ENCODE measurements at regions of chr20 and their contacts with region 1.

Region 1: GRCh38 chr20:5205348-5206210 is 78.8 kb downstream of the CDS2 start:
- DNase-seq: peak; percentile 68
- ATAC-seq: peak; percentile 88
- H3K4me3 ChIP-seq: no peak overlapping the region
- H3K4me3 Mint-ChIP-seq: no peak overlapping the region
- H3K27ac ChIP-seq: no peak overlapping the region
- H3K27ac Mint-ChIP-seq: no peak overlapping the region
- H3K4me1 ChIP-seq: no peaks in the 10 kb centered on the region
- H3K4me1 Mint-ChIP-seq: no peaks in the 10 kb centered on the region
- H3K27me3 ChIP-seq: no peaks in the 10 kb centered on the region
- H3K27me3 Mint-ChIP-seq: no peaks in the 10 kb centered on the region
- CTCF ChIP-seq: peak; percentile 95

Region 2: GRCh38 chr20:4533368-4534133 is 672.0 kb before region 1 on chr20:
- CTCF ChIA-PET with region 1: no interaction called
- POLR2A ChIA-PET with region 1: no interaction called
- intact Hi-C with region 1: no loop called
- DNase-seq: no peak
- ATAC-seq: no peak
- H3K4me3 ChIP-seq: no peak overlapping the region
- H3K4me3 Mint-ChIP-seq: no peak overlapping the region
- H3K27ac ChIP-seq: no peak overlapping the region
- H3K27ac Mint-ChIP-seq: no peak overlapping the region
- H3K4me1 ChIP-seq: no peaks in the 10 kb centered on the region
- H3K4me1 Mint-ChIP-seq: no peaks in the 10 kb centered on the region
- H3K27me3 ChIP-seq: peaks cover 0 to 7% (median 0%) of the 10 kb centered on the region in 4 experiments
- H3K27me3 Mint-ChIP-seq: peaks cover 44% of the 10 kb centered on the region
- CTCF ChIP-seq: no peak

Region 3: DNA sequence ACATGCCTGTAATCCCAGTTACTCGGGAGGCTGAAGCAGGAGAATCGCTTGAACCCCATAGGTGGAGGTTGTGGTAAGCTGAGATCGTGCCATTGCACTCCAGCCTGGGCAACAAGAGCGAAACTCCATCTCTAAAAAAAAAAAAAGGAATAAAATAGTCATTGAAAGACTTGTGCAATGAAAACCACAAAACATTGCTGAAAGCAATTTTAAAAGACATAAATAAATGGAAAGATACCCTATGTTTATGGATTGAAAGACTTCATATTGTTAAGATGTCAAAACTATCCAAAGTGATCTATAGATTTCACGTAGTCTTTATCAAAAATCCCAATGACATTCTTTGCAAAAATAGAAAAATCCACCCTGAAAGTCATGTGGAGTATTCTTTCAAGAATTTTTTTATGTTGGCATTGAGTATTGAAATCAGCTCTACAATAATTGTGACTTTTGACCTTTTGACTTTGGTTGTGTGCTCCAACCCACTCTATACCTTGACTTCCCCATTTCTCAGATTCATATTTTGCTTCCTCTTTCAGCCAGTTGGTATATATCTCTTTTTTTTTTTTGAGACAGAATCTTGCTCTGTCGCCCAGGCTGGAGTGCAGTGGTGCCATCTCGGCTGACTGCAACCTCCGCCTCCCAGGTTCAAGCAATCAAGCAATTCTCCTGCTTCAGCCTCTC is 158.8 kb before region 1 on chr20:
- CTCF ChIA-PET with region 1: no interaction called
- POLR2A ChIA-PET with region 1: no interaction called
- intact Hi-C with region 1: no loop called
- DNase-seq: peak; percentile 60
- ATAC-seq: peak; percentile 95
- H3K4me3 ChIP-seq: no peak overlapping the region
- H3K4me3 Mint-ChIP-seq: peak overlapping the region; percentile 0
- H3K27ac ChIP-seq: no peak overlapping the region
- H3K27ac Mint-ChIP-seq: peak overlapping the region; percentile 78
- H3K4me1 ChIP-seq: peaks cover 7 to 9% of the 10 kb centered on the region in 2 donors
- H3K4me1 Mint-ChIP-seq: peaks cover 30% of the 10 kb centered on the region
- H3K27me3 ChIP-seq: no peaks in the 10 kb centered on the region
- H3K27me3 Mint-ChIP-seq: no peaks in the 10 kb centered on the region
- CTCF ChIP-seq: no peak

Region 4: GRCh38 chr20:5191829-5192569 is 13.6 kb before region 1 on chr20:
- CTCF ChIA-PET with region 1: interaction called, 15 read pairs
- POLR2A ChIA-PET with region 1: interaction called, 6 read pairs
- intact Hi-C with region 1: no loop called
- DNase-seq: peak; percentile 76
- ATAC-seq: peak; percentile 84
- H3K4me3 ChIP-seq: no peak overlapping the region
- H3K4me3 Mint-ChIP-seq: no peak overlapping the region
- H3K27ac ChIP-seq: peak overlapping the region in 1 of 2 donors; percentile 38
- H3K27ac Mint-ChIP-seq: peak overlapping the region; percentile 56
- H3K4me1 ChIP-seq: peaks cover 0 to 7% of the 10 kb centered on the region in 2 donors
- H3K4me1 Mint-ChIP-seq: peaks cover 9% of the 10 kb centered on the region
- H3K27me3 ChIP-seq: no peaks in the 10 kb centered on the region
- H3K27me3 Mint-ChIP-seq: no peaks in the 10 kb centered on the region
- CTCF ChIP-seq: peak; percentile 77

Region 5: DNA sequence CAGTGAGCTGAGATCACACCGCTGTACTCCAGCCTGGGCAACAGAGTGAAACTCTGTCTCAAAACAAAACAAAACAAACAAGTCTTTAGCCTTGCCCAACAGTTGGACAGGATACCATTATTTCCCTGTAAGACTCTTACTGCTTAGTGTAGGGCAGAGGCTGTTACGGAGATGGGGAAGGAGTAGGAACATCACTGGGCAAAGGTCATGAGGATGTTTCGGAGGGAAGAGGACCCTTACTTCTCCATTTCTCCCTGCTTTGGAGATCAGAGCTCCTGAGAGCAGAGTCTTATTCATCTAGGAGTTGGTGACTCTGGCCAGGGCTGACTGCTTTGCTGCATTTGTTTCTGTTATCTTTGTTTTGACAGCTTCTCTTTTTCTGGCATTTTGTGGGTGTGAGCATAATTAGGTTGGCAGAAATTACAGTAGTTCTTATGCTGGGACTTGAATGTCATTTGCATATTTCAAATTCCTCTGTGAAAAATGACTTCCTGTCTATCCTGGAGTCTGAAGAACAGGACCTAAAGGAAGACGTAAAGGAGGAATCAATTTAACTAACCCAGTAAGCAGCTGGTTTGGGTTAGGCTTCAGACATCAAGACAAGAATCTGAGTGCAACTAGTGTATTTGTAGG is 10.2 kb after region 1 on chr20:
- CTCF ChIA-PET with region 1: interaction called, 51 read pairs
- POLR2A ChIA-PET with region 1: no interaction called
- intact Hi-C with region 1: no loop called
- DNase-seq: no peak
- ATAC-seq: no peak
- H3K4me3 ChIP-seq: no peak overlapping the region
- H3K4me3 Mint-ChIP-seq: no peak overlapping the region
- H3K27ac ChIP-seq: no peak overlapping the region
- H3K27ac Mint-ChIP-seq: no peak overlapping the region
- H3K4me1 ChIP-seq: no peaks in the 10 kb centered on the region
- H3K4me1 Mint-ChIP-seq: no peaks in the 10 kb centered on the region
- H3K27me3 ChIP-seq: no peaks in the 10 kb centered on the region
- H3K27me3 Mint-ChIP-seq: no peaks in the 10 kb centered on the region
- CTCF ChIP-seq: no peak

Region 6: GRCh38 chr20:5222919-5223634 is 17.5 kb after region 1 on chr20:
- CTCF ChIA-PET with region 1: interaction called, 51 read pairs
- POLR2A ChIA-PET with region 1: no interaction called
- intact Hi-C with region 1: no loop called
- DNase-seq: peak; percentile 55
- ATAC-seq: no peak
- H3K4me3 ChIP-seq: no peak overlapping the region
- H3K4me3 Mint-ChIP-seq: no peak overlapping the region
- H3K27ac ChIP-seq: no peak overlapping the region
- H3K27ac Mint-ChIP-seq: no peak overlapping the region
- H3K4me1 ChIP-seq: no peaks in the 10 kb centered on the region
- H3K4me1 Mint-ChIP-seq: no peaks in the 10 kb centered on the region
- H3K27me3 ChIP-seq: no peaks in the 10 kb centered on the region
- H3K27me3 Mint-ChIP-seq: peaks cover 5% of the 10 kb centered on the region
- CTCF ChIP-seq: peak; percentile 86

Region 7: DNA sequence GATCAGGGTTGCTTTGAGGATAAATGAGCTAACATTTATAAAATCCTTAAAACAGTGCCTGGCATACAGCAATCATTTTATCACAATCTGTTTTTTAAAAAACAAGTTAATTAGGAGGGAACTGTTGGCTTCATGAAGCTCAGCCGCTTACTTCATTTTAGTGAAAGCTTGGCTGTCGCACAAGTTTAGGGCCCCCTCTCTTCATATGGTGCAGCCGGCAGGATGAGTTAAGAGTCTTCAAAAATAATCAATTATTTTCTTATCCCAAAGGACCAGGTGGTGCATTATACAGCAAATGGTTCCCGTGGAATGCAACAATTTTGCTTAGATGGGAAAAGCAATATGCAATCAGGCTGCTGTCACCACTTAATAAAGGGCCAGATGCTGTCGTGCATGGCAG is 168.6 kb after region 1 on chr20:
- CTCF ChIA-PET with region 1: no interaction called
- POLR2A ChIA-PET with region 1: no interaction called
- intact Hi-C with region 1: no loop called
- DNase-seq: no peak
- ATAC-seq: no peak
- H3K4me3 ChIP-seq: no peak overlapping the region
- H3K4me3 Mint-ChIP-seq: no peak overlapping the region
- H3K27ac ChIP-seq: no peak overlapping the region
- H3K27ac Mint-ChIP-seq: no peak overlapping the region
- H3K4me1 ChIP-seq: no peaks in the 10 kb centered on the region
- H3K4me1 Mint-ChIP-seq: no peaks in the 10 kb centered on the region
- H3K27me3 ChIP-seq: peaks cover 0 to 3% (median 0%) of the 10 kb centered on the region in 4 experiments
- H3K27me3 Mint-ChIP-seq: peaks cover 38% of the 10 kb centered on the region
- CTCF ChIP-seq: no peak

Region 8: DNA sequence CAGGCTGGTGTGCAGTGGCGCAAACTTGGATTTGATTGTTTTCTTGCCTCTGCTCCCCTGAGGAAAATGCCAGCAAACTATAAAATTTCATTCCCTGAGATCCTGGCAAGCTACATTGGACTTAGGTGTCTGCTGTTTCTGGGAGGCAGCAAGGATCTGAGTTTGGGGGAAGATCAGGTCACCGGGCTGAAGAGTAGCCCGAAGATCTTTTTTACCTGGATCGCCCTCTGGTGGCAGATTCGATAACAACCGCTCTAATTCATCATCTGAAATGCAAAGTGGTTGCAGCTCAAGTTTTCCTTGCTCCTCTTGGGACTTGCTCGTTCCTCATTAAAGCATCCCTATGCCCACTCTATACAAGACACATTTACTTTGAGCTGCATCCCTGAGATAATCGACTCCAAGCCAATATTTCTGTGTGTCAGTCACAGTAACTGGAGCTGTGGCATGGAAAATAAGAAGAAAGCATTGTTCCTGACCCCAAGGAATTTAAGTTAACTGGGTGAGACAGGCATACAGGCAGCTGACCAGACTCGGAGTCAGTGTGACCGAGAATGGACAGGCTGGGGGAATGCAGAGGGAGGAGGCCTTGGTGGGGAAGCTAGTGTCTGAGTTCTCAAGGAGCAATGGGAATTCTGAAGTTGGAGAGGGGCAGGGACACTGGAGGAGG is 243.0 kb after region 1 on chr20:
- CTCF ChIA-PET with region 1: interaction called, 12 read pairs
- POLR2A ChIA-PET with region 1: no interaction called
- intact Hi-C with region 1: no loop called
- DNase-seq: peak; percentile 56
- ATAC-seq: peak; percentile 47
- H3K4me3 ChIP-seq: no peak overlapping the region
- H3K4me3 Mint-ChIP-seq: no peak overlapping the region
- H3K27ac ChIP-seq: no peak overlapping the region
- H3K27ac Mint-ChIP-seq: no peak overlapping the region
- H3K4me1 ChIP-seq: no peaks in the 10 kb centered on the region
- H3K4me1 Mint-ChIP-seq: no peaks in the 10 kb centered on the region
- H3K27me3 ChIP-seq: peaks cover 0 to 12% (median 4%) of the 10 kb centered on the region in 4 experiments
- H3K27me3 Mint-ChIP-seq: peaks cover 44% of the 10 kb centered on the region
- CTCF ChIP-seq: peak; percentile 84

Region 9: GRCh38 chr20:5608442-5609161 is 403.0 kb after region 1 on chr20:
- CTCF ChIA-PET with region 1: no interaction called
- POLR2A ChIA-PET with region 1: no interaction called
- intact Hi-C with region 1: no loop called
- DNase-seq: peak; percentile 32
- ATAC-seq: no peak
- H3K4me3 ChIP-seq: peak overlapping the region; percentile 70 to 98 (median 85)
- H3K4me3 Mint-ChIP-seq: peak overlapping the region; percentile 97
- H3K27ac ChIP-seq: peak overlapping the region; percentile 93 to 95
- H3K27ac Mint-ChIP-seq: peak overlapping the region; percentile 82
- H3K4me1 ChIP-seq: peaks cover 57% of the 10 kb centered on the region in 2 donors
- H3K4me1 Mint-ChIP-seq: peaks cover 58% of the 10 kb centered on the region
- H3K27me3 ChIP-seq: no peaks in the 10 kb centered on the region
- H3K27me3 Mint-ChIP-seq: no peaks in the 10 kb centered on the region
- CTCF ChIP-seq: no peak

Measured in B cell (primary cell).